Vagina (tissue), 2 donors: ENCODE measurements at regions of chr1 and their contacts with region 1.

Region 1: GRCh38 chr1:17502326-17502778 is 37.1 kb upstream of the ARHGEF10L start:
- DNase-seq: peak in 1 of 2 donors; percentile 90
- H3K4me3 ChIP-seq: no peak overlapping the region
- H3K27ac ChIP-seq: peak overlapping the region; percentile 65
- H3K4me1 ChIP-seq: peaks cover 13% of the 10 kb centered on the region
- H3K27me3 ChIP-seq: no peaks in the 10 kb centered on the region
- CTCF ChIP-seq: peak; percentile 91 to 95 (median 92)
- POLR2A ChIP-seq: no peak

Region 2: DNA sequence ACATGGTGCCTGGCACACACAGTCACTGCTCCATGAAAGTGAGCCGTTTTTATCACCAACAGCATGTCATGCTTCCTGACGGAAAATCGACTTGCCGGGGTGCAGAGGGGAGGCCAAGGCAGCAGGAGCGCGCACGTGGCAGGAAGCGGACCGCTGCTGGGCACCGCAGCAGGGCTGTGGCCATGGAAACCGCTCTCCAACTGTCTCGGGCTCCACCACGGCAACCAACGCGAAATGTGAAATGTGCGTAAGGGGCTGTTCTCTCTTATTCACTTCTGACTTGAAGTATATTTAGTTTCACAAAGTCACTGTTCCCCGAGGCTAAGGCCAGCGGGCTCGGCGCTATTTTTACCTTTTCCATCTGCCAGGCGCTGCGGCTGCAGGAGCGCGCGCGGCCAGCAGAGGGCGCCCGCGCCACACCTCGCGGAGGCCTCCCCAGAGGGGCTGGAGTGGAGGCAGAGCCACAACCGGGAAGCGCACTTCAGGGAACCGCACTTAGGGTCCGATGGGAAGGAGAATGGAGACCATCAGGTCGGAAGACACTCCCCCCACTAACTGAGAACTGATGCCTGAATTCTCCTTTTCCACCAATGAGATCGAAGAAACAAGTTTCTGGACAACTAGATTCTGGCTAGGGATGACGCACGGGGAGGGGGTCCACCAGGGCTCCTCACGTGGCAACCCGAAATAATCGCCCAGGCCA is 82.6 kb before region 1 on chr1:
- intact Hi-C with region 1: no loop called
- DNase-seq: no peak
- H3K4me3 ChIP-seq: no peak overlapping the region
- H3K27ac ChIP-seq: no peak overlapping the region
- H3K4me1 ChIP-seq: peaks cover 5% of the 10 kb centered on the region
- H3K27me3 ChIP-seq: no peaks in the 10 kb centered on the region
- CTCF ChIP-seq: peak; percentile 89 to 97 (median 90)
- POLR2A ChIP-seq: no peak

Region 3: DNA sequence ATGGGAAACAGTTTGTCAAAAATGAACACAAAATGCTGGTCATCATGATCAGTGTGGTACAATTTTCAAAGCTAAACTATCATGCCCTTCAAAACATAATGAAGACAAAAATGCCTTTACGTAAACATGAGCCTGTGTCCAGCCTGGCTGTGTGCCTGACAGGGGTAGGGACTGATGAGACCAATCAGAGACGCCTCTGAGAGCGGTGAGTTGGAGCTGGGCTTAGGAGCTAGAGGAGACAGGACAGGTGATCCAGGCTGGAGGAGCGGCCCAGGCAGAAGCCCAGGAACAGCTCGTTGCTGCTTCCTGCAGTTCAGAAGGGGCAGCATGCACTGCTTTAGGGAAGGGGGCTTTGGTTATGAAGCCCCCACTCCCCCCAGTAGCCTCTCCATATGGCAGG is 107.2 kb after region 1 on chr1:
- intact Hi-C with region 1: loop called (anchors 1 kb)
- DNase-seq: no peak
- H3K4me3 ChIP-seq: no peak overlapping the region
- H3K27ac ChIP-seq: no peak overlapping the region
- H3K4me1 ChIP-seq: peaks cover 7% of the 10 kb centered on the region
- H3K27me3 ChIP-seq: no peaks in the 10 kb centered on the region
- CTCF ChIP-seq: no peak
- POLR2A ChIP-seq: no peak